ENCODE measurements at regions of chr22 and their contacts with region 1.

Region 1: GRCh38 chr22:41946629-41947423 is at the start of gene CENPM:
- DNase-seq: peak; percentile 91 to 93
- ATAC-seq: peak; percentile 94
- total RNA-seq, gene CENPM: 7.5 to 16.4 TPM

Region 2: GRCh38 chr22:41479671-41480396 is 467.0 kb before region 1 on chr22:
- intact Hi-C with region 1: no loop called
- DNase-seq: no peak
- ATAC-seq: no peak

Region 3: GRCh38 chr22:41780746-41781505 is 165.9 kb before region 1 on chr22:
- intact Hi-C with region 1: no loop called
- DNase-seq: peak; percentile 72 to 80
- ATAC-seq: peak; percentile 84

Region 4: GRCh38 chr22:41800348-41801146 is 146.3 kb before region 1 on chr22 and contains the start of gene CCDC134:
- intact Hi-C with region 1: loop called in 1 of 2 experiments (anchors 10 kb)
- DNase-seq: peak; percentile 90 to 94
- ATAC-seq: peak; percentile 98
- total RNA-seq, gene CCDC134: 8.8 to 11.0 TPM